ENCODE measurements at regions of chr7 and their contacts with region 1.

Region 1: GRCh38 chr7:98745722-98746318 is 124.0 kb downstream of the TMEM130 start:
- DNase-seq: peak; percentile 42 to 74
- H3K4me3 ChIP-seq: no peak overlapping the region
- H3K27ac ChIP-seq: no peak overlapping the region
- H3K4me1 ChIP-seq: no peaks in the 10 kb centered on the region
- H3K27me3 ChIP-seq: peaks cover 61% of the 10 kb centered on the region
- CTCF ChIP-seq: peak; percentile 87

Region 2: GRCh38 chr7:98294796-98295382 is 450.9 kb before region 1 on chr7:
- CTCF ChIA-PET with region 1: no interaction called
- POLR2A ChIA-PET with region 1: no interaction called
- intact Hi-C with region 1: loop called (anchors 2 kb)
- DNase-seq: peak; percentile 45 to 77
- H3K4me3 ChIP-seq: no peak overlapping the region
- H3K27ac ChIP-seq: no peak overlapping the region
- H3K4me1 ChIP-seq: no peaks in the 10 kb centered on the region
- H3K27me3 ChIP-seq: no peaks in the 10 kb centered on the region
- CTCF ChIP-seq: peak; percentile 84

Region 3: GRCh38 chr7:98420966-98421612 is 324.7 kb before region 1 on chr7:
- CTCF ChIA-PET with region 1: interaction called, 11 read pairs
- POLR2A ChIA-PET with region 1: no interaction called
- intact Hi-C with region 1: loop called (anchors 1 kb)
- DNase-seq: peak; percentile 69 to 88
- H3K4me3 ChIP-seq: peak overlapping the region; percentile 6; the same call in 1 of the 2 replicates
- H3K27ac ChIP-seq: no peak overlapping the region
- H3K4me1 ChIP-seq: peaks cover 44% of the 10 kb centered on the region
- H3K27me3 ChIP-seq: no peaks in the 10 kb centered on the region
- CTCF ChIP-seq: peak; percentile 94

Region 4: DNA sequence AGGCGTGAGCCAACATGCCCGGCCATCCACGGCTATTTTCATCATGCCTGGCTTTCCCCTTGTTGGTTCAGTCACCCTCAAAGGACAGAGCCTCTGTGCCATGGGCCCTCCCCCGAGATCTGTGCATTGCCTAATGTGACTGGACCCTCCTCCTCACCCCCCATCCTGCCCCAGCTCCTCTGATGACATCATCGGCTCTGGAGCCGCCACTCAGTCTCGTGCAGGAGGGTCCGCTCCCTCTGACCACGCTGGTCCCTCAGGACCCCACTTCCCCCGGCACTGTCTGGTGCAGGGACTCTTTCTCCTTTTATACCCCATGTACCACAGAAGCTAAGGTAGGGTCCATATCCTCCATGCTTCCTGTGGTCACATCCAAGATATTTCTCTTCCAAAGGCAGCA is 311.7 kb before region 1 on chr7:
- CTCF ChIA-PET with region 1: no interaction called
- POLR2A ChIA-PET with region 1: no interaction called
- intact Hi-C with region 1: loop called (anchors 1 kb)
- DNase-seq: no peak
- H3K4me3 ChIP-seq: no peak overlapping the region
- H3K27ac ChIP-seq: no peak overlapping the region
- H3K4me1 ChIP-seq: no peaks in the 10 kb centered on the region
- H3K27me3 ChIP-seq: no peaks in the 10 kb centered on the region
- CTCF ChIP-seq: no peak

Region 5: GRCh38 chr7:99478464-99479440 is 732.9 kb after region 1 on chr7:
- CTCF ChIA-PET with region 1: no interaction called
- POLR2A ChIA-PET with region 1: no interaction called
- intact Hi-C with region 1: no loop called
- DNase-seq: no peak
- H3K4me3 ChIP-seq: no peak overlapping the region
- H3K27ac ChIP-seq: no peak overlapping the region
- H3K4me1 ChIP-seq: peaks cover 4% of the 10 kb centered on the region; the same call in 1 of the 2 replicates
- H3K27me3 ChIP-seq: no peaks in the 10 kb centered on the region
- CTCF ChIP-seq: no peak